ENCODE measurements at regions of chr15 and their contacts with region 1.

Region 1: DNA sequence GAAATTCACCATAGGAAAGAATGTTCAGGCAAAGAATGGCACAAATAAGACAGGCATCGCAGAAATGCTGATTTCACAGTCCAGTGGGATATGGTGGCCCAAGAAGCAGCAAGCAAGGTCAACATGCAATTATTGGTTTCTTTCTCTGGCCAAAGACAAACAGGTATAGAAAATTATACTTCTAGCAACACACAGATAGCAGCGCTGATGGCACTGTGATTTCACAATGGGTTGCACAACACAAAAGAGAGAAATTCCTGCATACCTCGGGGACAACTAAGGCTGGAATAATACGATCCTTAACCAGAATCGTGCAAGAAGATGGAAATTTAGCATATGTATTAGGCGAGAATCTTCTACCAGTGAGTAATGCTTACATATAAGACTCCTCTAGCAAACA is 76.3 kb upstream of the NR2F2 start:
- DNase-seq: no peak
- ATAC-seq: no peak
- H3K4me3 ChIP-seq: no peak overlapping the region
- H3K27ac ChIP-seq: no peak overlapping the region
- H3K4me1 ChIP-seq: no peaks in the 10 kb centered on the region
- H3K27me3 ChIP-seq: no peaks in the 10 kb centered on the region
- CTCF ChIP-seq: no peak
- POLR2A ChIP-seq: no peak

Region 2: DNA sequence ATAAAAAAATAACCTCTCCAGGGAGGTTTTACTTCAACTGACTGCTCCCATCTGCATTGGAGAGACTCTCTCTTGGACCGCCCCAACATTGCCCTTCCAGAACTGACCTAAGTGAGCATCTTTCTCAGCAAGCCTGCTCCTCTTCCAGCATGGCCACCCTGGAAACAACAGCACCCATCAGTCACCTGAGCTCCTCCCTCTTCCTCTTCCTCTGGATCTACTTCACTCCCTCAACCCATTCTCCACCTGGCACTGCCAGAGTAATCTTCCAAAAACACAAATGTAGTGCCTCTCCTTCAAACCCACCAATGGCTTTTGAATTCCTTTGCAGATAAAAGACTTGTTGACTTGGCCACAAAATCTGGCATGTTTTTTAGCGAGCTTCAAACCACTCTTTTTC is 52.5 kb before region 1 on chr15:
- in situ Hi-C with region 1: no loop called
- intact Hi-C with region 1: loop called (anchors 2 kb)
- DNase-seq: no peak
- ATAC-seq: no peak
- H3K4me3 ChIP-seq: no peak overlapping the region
- H3K27ac ChIP-seq: no peak overlapping the region
- H3K4me1 ChIP-seq: no peaks in the 10 kb centered on the region
- H3K27me3 ChIP-seq: no peaks in the 10 kb centered on the region
- CTCF ChIP-seq: no peak
- POLR2A ChIP-seq: no peak